Caco-2 (cell line): ENCODE measurements at regions of chr2 and their contacts with region 1.

Region 1: GRCh38 chr2:11234309-11234708 is 79.0 kb downstream of the SLC66A3 start:
- DNase-seq: no peak
- H3K4me3 ChIP-seq: no peak overlapping the region
- H3K4me3 Mint-ChIP-seq: no peak overlapping the region
- H3K27ac Mint-ChIP-seq: no peak overlapping the region
- H3K4me1 ChIP-seq: no peaks in the 10 kb centered on the region
- H3K4me1 Mint-ChIP-seq: peaks cover 10% of the 10 kb centered on the region
- H3K27me3 ChIP-seq: no peaks in the 10 kb centered on the region
- H3K27me3 Mint-ChIP-seq: no peaks in the 10 kb centered on the region
- CTCF ChIP-seq: peak; percentile 13 to 21

Region 2: DNA sequence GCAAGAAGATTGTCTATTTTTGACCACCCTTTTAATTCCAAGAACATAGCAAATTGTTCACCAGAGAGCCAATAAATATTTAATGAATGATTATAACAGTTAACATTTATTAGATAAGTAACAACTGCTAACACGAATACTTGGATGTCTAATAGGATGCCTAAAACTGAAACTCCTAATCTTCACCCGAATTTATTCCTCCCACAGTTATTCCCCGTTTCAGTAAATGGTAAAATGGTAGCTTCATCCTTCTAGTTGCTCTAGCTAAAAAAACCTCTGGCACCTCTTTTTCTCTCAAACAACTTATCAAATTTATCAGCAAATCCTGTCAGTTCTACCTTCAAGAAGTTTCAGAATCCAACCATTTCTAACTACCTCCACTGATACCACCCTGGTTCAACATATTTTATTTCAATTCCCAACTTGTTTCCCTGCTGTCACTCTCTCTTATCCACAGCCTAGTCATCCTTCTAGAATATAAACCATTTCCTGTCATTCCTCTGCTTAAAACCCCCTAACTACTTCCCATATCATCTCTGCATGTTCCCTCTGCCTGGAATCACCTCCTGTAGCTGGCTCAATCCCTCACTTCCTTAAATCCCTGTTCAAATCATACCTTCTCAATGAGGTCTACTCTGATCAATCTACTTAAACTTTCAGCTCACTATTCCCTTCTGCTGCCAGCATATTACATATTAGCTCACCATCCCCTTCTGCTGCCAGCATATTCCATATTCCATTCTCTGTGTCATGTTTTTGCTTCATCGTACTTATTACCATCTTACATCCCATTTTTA is 16.3 kb after region 1 on chr2:
- CTCF ChIA-PET with region 1: no interaction called
- POLR2A ChIA-PET with region 1: no interaction called
- intact Hi-C with region 1: no loop called
- DNase-seq: no peak
- H3K4me3 ChIP-seq: no peak overlapping the region
- H3K4me3 Mint-ChIP-seq: no peak overlapping the region
- H3K27ac Mint-ChIP-seq: no peak overlapping the region
- H3K4me1 ChIP-seq: peaks cover 8% of the 10 kb centered on the region
- H3K4me1 Mint-ChIP-seq: no peaks in the 10 kb centered on the region
- H3K27me3 ChIP-seq: no peaks in the 10 kb centered on the region
- H3K27me3 Mint-ChIP-seq: no peaks in the 10 kb centered on the region
- CTCF ChIP-seq: no peak

Region 3: GRCh38 chr2:11411768-11412448 is 177.6 kb after region 1 on chr2:
- CTCF ChIA-PET with region 1: interaction called, 5 read pairs
- POLR2A ChIA-PET with region 1: no interaction called
- intact Hi-C with region 1: loop called (anchors 1 kb)
- DNase-seq: peak; percentile 54 to 64
- H3K4me3 ChIP-seq: no peak overlapping the region
- H3K4me3 Mint-ChIP-seq: no peak overlapping the region
- H3K27ac Mint-ChIP-seq: no peak overlapping the region
- H3K4me1 ChIP-seq: no peaks in the 10 kb centered on the region
- H3K4me1 Mint-ChIP-seq: no peaks in the 10 kb centered on the region
- H3K27me3 ChIP-seq: no peaks in the 10 kb centered on the region
- H3K27me3 Mint-ChIP-seq: no peaks in the 10 kb centered on the region
- CTCF ChIP-seq: peak; percentile 78 to 82